Tibial artery (tissue), 4 donors: ENCODE measurements at regions of chr19 and their contacts with region 1.

Region 1: DNA sequence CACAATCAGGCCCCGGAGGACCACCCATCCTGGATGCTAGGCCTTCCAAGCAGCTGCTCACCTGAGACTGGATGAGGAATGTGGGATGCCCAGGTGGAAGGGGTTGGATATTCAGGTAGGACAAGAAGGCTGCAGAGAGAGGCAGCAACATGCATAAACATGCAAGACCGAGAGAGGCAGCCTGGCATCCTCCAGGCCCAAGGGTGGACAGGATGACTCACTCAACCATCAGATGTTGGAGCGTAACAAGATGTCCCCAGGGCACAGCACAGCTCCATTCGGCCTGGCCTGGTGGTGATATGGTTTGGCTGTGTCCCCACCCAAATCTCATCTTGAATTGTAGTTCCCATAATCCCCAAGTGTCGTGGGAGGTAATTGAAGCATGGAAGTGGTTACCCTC is 10.0 kb upstream of the CABP5 start:
- DNase-seq: no peak
- H3K4me3 ChIP-seq: no peak overlapping the region
- H3K27ac ChIP-seq: no peak overlapping the region
- H3K4me1 ChIP-seq: no peaks in the 10 kb centered on the region
- H3K27me3 ChIP-seq: no peaks in the 10 kb centered on the region
- CTCF ChIP-seq: no peak

Region 2: GRCh38 chr19:48000846-48001245 is 53.0 kb before region 1 on chr19:
- intact Hi-C with region 1: loop called (anchors 5 kb)
- DNase-seq: no peak
- H3K4me3 ChIP-seq: no peak overlapping the region
- H3K27ac ChIP-seq: no peak overlapping the region
- H3K4me1 ChIP-seq: no peaks in the 10 kb centered on the region
- H3K27me3 ChIP-seq: peaks cover 0 to 10% of the 10 kb centered on the region in 2 donors
- CTCF ChIP-seq: no peak

Region 3: DNA sequence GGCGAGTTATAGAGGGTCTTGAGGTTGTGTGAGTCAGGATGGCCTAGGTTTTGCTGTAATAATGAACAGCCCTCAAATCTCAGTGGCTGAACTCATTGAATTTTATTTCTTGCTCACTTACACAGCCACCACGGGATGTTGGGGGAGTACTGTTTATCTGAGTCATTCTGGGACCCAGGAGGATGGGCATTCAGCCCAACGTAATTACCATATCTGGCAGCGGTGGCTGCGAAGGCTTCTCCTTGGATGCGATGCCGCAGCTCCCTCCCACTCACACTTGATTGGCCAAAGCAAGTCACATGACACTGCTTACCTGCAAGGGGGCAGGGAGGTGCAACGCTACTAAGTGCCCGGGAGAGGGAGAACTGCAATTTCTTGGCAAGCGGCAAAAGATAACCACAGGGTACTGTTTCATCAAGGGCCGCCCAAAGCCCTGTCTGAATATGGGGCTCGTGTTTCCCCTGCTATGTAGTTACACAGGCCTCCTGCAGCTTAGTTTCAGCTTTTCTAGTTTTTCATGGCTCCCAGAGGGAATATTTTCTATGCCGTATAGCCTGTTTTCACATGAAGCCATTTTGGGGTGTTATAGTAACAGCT is 136.5 kb after region 1 on chr19:
- intact Hi-C with region 1: no loop called
- DNase-seq: peak in 1 of 2 donors; percentile 10
- H3K4me3 ChIP-seq: no peak overlapping the region
- H3K27ac ChIP-seq: no peak overlapping the region
- H3K4me1 ChIP-seq: no peaks in the 10 kb centered on the region
- H3K27me3 ChIP-seq: no peaks in the 10 kb centered on the region
- CTCF ChIP-seq: no peak